K562 (cell line): ENCODE measurements at regions of chr14 and their contacts with region 1.

Region 1: DNA sequence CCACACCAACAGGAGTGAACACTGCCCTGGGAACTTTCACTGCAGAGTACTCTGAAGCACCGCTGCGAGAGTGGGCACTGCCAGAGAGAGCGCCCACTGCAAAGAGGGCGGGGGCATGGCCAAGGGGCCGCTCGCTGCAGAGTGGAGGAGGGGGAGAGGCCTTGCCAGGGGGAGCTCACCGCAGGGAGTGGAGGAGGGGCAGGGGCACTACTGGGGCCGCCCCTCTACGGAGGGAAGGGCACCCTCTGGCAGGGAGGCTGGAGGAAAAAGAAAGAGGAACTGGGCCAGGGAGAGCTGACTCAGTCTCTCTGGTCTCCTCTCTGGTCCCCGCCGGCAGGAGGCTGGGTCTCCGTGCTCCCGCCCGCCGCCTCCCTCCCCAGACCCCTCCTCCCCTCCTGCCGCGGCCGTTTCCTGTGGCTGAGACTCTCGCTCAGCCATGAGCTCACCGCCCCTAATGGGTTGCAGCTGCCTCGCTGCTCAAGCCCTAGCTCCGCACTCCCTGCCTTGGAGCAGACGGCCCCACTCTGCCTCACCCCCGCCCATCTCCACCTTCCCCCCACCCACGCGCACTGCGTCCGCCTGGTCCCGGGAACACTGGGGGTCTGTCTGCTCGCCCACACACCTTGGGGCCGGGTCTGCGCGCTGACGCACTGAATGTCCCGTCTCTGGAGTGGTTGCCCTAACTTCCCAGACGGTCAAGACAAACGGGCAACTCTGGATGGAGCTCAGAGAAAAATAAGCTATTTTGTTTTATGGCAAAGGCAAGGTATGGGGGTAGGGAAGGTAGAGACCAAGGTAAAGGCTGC is 1.3 kb downstream of the ARHGEF40 start:
- DNase-seq: peak; percentile 58 to 76 (median 62)
- ATAC-seq: peak; percentile 72
- H3K4me3 ChIP-seq: 0 out of 2 replicates have a peak overlapping the region, but pooled peaks have one; percentile 13
- H3K27ac ChIP-seq: no peak overlapping the region; the same call in 2 of the 3 replicates
- H3K4me1 ChIP-seq: peaks cover 2 to 41% of the 10 kb centered on the region in 2 experiments; a peak in 3 of 5 replicates
- H3K27me3 ChIP-seq: no peaks in the 10 kb centered on the region
- CTCF ChIP-seq: no peak
- EP300 ChIP-seq: no peak
- POLR2A ChIP-seq: no peak
- RAD21 ChIP-seq: no peak

Region 2: GRCh38 chr14:21024585-21025370 is 46.6 kb before region 1 on chr14 and contains the start of gene NDRG2:
- CTCF ChIA-PET with region 1: no interaction called
- POLR2A ChIA-PET with region 1: no interaction called
- in situ Hi-C with region 1: no loop called
- intact Hi-C with region 1: no loop called
- DNase-seq: peak; percentile 85 to 92 (median 91)
- ATAC-seq: peak; percentile 90
- H3K4me3 ChIP-seq: peak within 1 kb of the TSS; percentile 66
- H3K27ac ChIP-seq: peak within 1 kb of the TSS; percentile 80
- H3K4me1 ChIP-seq: peaks cover 35 to 39% of the 10 kb centered on the region in 2 experiments
- H3K27me3 ChIP-seq: no peaks in the 10 kb centered on the region
- CTCF ChIP-seq: no peak
- EP300 ChIP-seq: no peak
- POLR2A ChIP-seq: peak; percentile 65
- RAD21 ChIP-seq: no peak
- polyA plus RNA-seq, gene NDRG2: 10.1 to 22.9 TPM

Region 3: DNA sequence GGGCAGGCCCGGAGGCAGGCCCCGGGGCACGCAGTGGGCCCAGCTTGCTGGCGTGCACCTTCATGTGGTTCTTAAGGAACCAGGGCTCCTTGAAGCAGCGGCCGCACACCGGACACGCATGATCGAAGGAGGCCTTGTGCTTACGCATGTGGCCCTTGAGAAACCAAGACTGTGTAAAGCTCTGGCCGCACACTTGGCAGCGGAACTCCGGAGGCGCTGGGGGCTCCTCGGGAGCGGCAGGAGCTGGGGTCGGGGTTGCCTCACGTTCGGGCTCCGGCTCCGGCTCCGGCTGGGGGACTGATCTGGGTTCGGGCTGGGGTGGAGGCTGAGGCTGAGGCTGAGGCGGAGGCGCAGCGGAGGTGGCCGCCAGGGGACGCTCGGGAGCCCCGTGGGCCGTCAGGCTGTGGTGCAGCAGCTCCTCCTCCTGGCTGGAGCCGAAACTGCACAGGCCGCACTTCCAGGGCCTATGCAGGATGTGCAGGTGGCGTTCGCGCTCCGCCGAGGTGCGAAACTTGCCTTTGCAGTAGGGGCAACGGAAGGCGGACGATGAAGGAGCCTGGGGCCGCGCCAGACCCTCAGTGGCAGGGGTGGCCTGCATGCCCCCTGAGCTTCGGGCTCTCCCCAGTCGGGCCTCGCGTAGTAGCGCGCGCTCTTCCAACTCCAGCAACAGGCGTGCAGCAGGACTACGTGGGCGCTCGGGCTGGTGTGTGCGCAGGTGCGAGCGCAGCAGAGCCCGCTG is 21.0 kb after region 1 on chr14:
- CTCF ChIA-PET with region 1: interaction called, 11 read pairs
- POLR2A ChIA-PET with region 1: interaction called, 6 read pairs
- in situ Hi-C with region 1: no loop called
- intact Hi-C with region 1: loop called (anchors 1 kb)
- DNase-seq: peak; percentile 72 to 78 (median 74)
- ATAC-seq: peak; percentile 88
- H3K4me3 ChIP-seq: no peak overlapping the region
- H3K27ac ChIP-seq: no peak overlapping the region
- H3K4me1 ChIP-seq: peaks cover 4 to 29% of the 10 kb centered on the region in 2 experiments; a peak in 4 of 5 replicates
- H3K27me3 ChIP-seq: no peaks in the 10 kb centered on the region
- CTCF ChIP-seq: peak; percentile 98 to 100 (median 100)
- EP300 ChIP-seq: no peak
- POLR2A ChIP-seq: no peak
- RAD21 ChIP-seq: peak; percentile 92 to 98